Activated B cell treated with CpG ODN at 0.5 μM for 24 hours (primary cell): ENCODE measurements at regions of chr3 and their contacts with region 1.

Region 1: GRCh38 chr3:4928277-4928789 is 50.9 kb upstream of the BHLHE40 start:
- DNase-seq: no peak
- ATAC-seq: no peak
- H3K4me3 Mint-ChIP-seq: no peak overlapping the region
- H3K27ac Mint-ChIP-seq: no peak overlapping the region
- H3K4me1 Mint-ChIP-seq: peaks cover 7% of the 10 kb centered on the region
- H3K27me3 Mint-ChIP-seq: no peaks in the 10 kb centered on the region
- CTCF ChIP-seq: no peak

Region 2: GRCh38 chr3:4797201-4797705 is 131.1 kb before region 1 on chr3:
- CTCF ChIA-PET with region 1: no interaction called
- POLR2A ChIA-PET with region 1: no interaction called
- intact Hi-C with region 1: no loop called
- DNase-seq: no peak
- ATAC-seq: no peak
- H3K4me3 Mint-ChIP-seq: no peak overlapping the region
- H3K27ac Mint-ChIP-seq: no peak overlapping the region
- H3K4me1 Mint-ChIP-seq: no peaks in the 10 kb centered on the region
- H3K27me3 Mint-ChIP-seq: no peaks in the 10 kb centered on the region
- CTCF ChIP-seq: no peak

Region 3: DNA sequence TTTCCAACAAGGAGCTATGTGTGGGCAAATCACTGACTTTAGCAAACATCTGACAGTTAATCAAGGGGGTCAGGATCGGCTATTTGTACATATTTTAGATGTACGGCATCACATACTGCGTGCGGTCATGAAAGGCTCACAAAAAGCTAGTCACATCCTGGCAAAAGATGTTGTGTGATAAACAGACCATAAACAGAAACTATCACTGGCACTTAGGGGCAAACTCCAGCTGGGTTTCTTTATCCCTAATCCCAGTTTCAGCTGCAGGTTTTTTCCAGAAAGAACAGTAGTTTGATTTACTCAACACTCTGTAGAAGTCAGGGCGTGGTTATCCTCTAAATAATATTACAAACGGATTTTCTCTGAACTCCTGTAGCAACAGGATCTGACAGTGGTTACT is 61.5 kb before region 1 on chr3:
- CTCF ChIA-PET with region 1: no interaction called
- POLR2A ChIA-PET with region 1: no interaction called
- intact Hi-C with region 1: no loop called
- DNase-seq: no peak
- ATAC-seq: no peak
- H3K4me3 Mint-ChIP-seq: no peak overlapping the region
- H3K27ac Mint-ChIP-seq: no peak overlapping the region
- H3K4me1 Mint-ChIP-seq: peaks cover 13% of the 10 kb centered on the region
- H3K27me3 Mint-ChIP-seq: no peaks in the 10 kb centered on the region
- CTCF ChIP-seq: no peak

Region 4: GRCh38 chr3:4972652-4973643 is 44.6 kb after region 1 on chr3:
- CTCF ChIA-PET with region 1: no interaction called
- POLR2A ChIA-PET with region 1: no interaction called
- intact Hi-C with region 1: loop called (anchors 5 kb)
- DNase-seq: no peak
- ATAC-seq: no peak
- H3K4me3 Mint-ChIP-seq: peak overlapping the region; percentile 75
- H3K27ac Mint-ChIP-seq: peak overlapping the region; percentile 85
- H3K4me1 Mint-ChIP-seq: peaks cover 43% of the 10 kb centered on the region
- H3K27me3 Mint-ChIP-seq: no peaks in the 10 kb centered on the region
- CTCF ChIP-seq: no peak